GM12878 (cell line): ENCODE measurements at regions of chr20 and their contacts with region 1.

Region 1: DNA sequence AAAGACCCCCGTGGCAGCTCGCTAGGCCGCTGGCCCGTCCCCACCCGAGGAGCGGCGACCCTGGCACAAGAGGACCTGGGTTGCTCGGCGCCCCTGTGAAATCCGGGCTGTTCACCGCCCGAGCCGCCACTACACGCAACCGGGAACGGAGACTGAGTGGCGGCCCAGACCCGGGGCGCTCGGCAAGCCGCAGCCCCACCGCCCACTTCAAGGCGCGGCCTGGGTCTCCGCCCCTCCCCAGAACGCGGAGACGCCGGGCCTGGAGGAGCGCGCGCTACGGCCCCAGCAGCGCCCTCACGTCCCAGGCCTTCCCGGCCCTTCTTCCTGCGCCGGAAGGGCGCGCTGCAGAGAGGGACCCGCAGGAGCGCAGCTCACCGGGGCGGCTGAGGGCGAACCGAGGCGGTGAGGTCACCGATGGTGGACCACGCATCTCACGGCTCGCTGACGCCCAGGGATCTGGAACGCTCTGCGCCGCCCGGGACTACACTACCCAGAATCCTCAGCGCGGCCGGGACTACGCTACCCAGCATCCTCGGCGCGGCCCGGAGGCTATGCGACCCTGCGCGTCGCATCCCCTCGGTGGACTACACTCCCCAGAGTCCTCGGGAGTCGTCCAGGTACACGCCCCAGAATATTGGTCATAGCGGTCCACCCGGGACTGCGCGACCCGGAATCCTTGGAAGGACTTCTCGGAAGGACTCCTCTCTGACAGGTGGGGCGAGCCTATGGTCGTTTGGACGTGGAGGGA is at the start of gene ZNF337:
- DNase-seq: peak; percentile 77
- ATAC-seq: peak; percentile 97
- H3K4me3 ChIP-seq: peak within 1 kb of the TSS; percentile 92
- H3K27ac ChIP-seq: peak within 1 kb of the TSS; percentile 86
- H3K4me1 ChIP-seq: peaks cover 18% of the 10 kb centered on the region
- H3K27me3 ChIP-seq: no peaks in the 10 kb centered on the region
- CTCF ChIP-seq: no peak
- EP300 ChIP-seq: no peak
- POLR2A ChIP-seq: peak; percentile 95
- RAD21 ChIP-seq: 0 out of 2 replicates have a peak, but pooled peaks have one; percentile 4
- polyA plus RNA-seq, gene ZNF337: 0.60 to 2.6 TPM

Region 2: GRCh38 chr20:25418776-25419175 is 277.8 kb before region 1 on chr20:
- CTCF ChIA-PET with region 1: no interaction called
- POLR2A ChIA-PET with region 1: no interaction called
- RAD21 ChIA-PET with region 1: no interaction called
- SMC1A ChIA-PET with region 1: no interaction called
- in situ Hi-C with region 1: loop called (anchors 10 kb)
- intact Hi-C with region 1: no loop called
- DNase-seq: no peak
- ATAC-seq: no peak
- H3K4me3 ChIP-seq: no peak overlapping the region
- H3K27ac ChIP-seq: no peak overlapping the region
- H3K4me1 ChIP-seq: no peaks in the 10 kb centered on the region
- H3K27me3 ChIP-seq: no peaks in the 10 kb centered on the region
- CTCF ChIP-seq: no peak
- EP300 ChIP-seq: no peak
- POLR2A ChIP-seq: no peak
- RAD21 ChIP-seq: no peak

Region 3: DNA sequence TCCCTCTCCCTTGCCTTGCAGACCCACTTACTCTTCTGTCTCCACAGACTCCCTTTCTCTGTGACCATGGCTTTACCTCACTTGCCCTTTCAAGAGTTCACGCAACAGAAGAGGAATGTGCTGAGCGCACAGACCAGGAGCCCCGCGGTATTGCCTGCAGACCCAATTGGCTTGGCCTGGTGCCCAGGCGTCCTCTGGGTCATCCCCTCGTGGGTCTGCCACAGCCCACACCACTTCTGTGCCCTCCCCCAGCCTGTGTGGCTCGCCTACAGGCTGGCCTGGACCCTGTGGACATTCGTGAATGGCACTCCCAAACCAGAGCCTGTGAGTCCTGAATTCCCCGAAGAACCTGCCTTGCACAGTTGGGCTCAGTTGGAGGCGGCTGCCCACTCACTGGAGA is 95.9 kb before region 1 on chr20:
- CTCF ChIA-PET with region 1: no interaction called
- POLR2A ChIA-PET with region 1: no interaction called
- RAD21 ChIA-PET with region 1: no interaction called
- SMC1A ChIA-PET with region 1: no interaction called
- in situ Hi-C with region 1: no loop called
- intact Hi-C with region 1: no loop called
- DNase-seq: no peak
- ATAC-seq: no peak
- H3K4me3 ChIP-seq: no peak overlapping the region
- H3K27ac ChIP-seq: no peak overlapping the region
- H3K4me1 ChIP-seq: no peaks in the 10 kb centered on the region
- H3K27me3 ChIP-seq: no peaks in the 10 kb centered on the region
- CTCF ChIP-seq: no peak
- EP300 ChIP-seq: no peak
- POLR2A ChIP-seq: no peak
- RAD21 ChIP-seq: no peak